ENCODE measurements at regions of chr2 and their contacts with region 1.

Region 1: GRCh38 chr2:207077266-207077665 is 88.5 kb downstream of the KLF7 start:
- DNase-seq: no peak
- H3K4me3 ChIP-seq: no peak overlapping the region
- H3K27ac ChIP-seq: no peak overlapping the region
- H3K4me1 ChIP-seq: no peaks in the 10 kb centered on the region
- H3K27me3 ChIP-seq: no peaks in the 10 kb centered on the region
- CTCF ChIP-seq: no peak

Region 2: DNA sequence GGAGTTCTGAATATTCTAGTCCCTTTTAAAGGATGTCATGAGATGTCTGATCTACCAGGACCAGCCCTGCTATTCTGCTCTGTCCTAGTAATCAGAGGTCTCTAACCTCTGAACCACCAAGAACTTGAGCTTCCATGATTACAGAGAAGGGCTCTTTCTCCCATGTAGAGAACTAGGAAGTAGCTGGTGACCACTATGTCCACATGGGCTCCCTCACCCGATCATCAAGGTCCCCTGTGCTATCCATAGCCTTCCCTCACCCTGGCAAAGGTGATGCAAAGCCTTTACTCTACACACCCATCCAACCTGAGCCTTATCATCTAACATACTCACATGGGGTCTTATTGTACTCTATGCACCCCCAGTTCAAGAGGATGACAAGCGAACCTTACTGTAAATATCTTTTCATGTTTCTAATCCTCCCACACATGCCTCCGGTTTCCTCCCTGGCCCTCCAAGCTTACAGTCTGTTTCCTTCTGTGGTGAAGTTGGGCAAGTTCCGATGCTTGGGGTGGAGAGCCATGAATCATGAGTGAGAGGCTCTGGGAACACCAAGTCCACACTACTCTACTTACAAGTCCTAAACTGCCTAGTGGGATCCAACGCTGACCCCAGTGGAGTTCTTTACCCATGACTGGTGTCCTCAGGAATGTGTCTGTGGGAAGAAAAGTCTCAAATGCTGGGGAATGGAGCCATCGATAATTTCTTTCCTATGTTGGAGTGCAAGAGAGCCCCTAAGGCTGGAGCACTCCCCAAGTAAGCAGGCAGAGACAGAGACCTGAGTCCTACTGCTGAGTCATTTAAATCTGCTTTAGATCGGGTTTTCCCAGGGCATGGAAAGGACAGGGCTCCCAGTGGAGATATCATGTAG is 161.8 kb after region 1 on chr2:
- CTCF ChIA-PET with region 1: interaction called, 13 read pairs
- POLR2A ChIA-PET with region 1: no interaction called
- intact Hi-C with region 1: no loop called
- DNase-seq: peak; percentile 33 to 47
- H3K4me3 ChIP-seq: no peak overlapping the region
- H3K27ac ChIP-seq: peak overlapping the region; percentile 32; the same call in 1 of the 2 replicates
- H3K4me1 ChIP-seq: peaks cover 6% of the 10 kb centered on the region; the same call in 1 of the 2 replicates
- H3K27me3 ChIP-seq: no peaks in the 10 kb centered on the region
- CTCF ChIP-seq: no peak